Tibial artery (tissue), 4 donors: ENCODE measurements at regions of chr15 and their contacts with region 1.

Region 1: GRCh38 chr15:59492389-59493377 is 54.7 kb downstream of the FAM81A start:
- DNase-seq: peak; percentile 48 to 77
- H3K4me3 ChIP-seq: no peak overlapping the region
- H3K27ac ChIP-seq: no peak overlapping the region
- H3K4me1 ChIP-seq: peaks cover 0 to 8% (median 3%) of the 10 kb centered on the region in 4 donors
- H3K27me3 ChIP-seq: no peaks in the 10 kb centered on the region
- CTCF ChIP-seq: peak; percentile 76 to 91

Region 2: GRCh38 chr15:58980351-58980939 is 512.2 kb before region 1 on chr15:
- intact Hi-C with region 1: loop called (anchors 5 kb)
- DNase-seq: no peak
- H3K4me3 ChIP-seq: no peak overlapping the region
- H3K27ac ChIP-seq: no peak overlapping the region
- H3K4me1 ChIP-seq: peaks cover 0 to 5% (median 2%) of the 10 kb centered on the region in 4 donors
- H3K27me3 ChIP-seq: no peaks in the 10 kb centered on the region
- CTCF ChIP-seq: peak; percentile 36 to 59

Region 3: GRCh38 chr15:59174835-59175831 is 317.6 kb before region 1 on chr15:
- intact Hi-C with region 1: loop called (anchors 5 kb)
- DNase-seq: peak in 1 of 2 donors; percentile 49
- H3K4me3 ChIP-seq: no peak overlapping the region
- H3K27ac ChIP-seq: peak overlapping the region; percentile 25 to 53
- H3K4me1 ChIP-seq: peaks cover 6 to 28% (median 14%) of the 10 kb centered on the region in 4 donors
- H3K27me3 ChIP-seq: no peaks in the 10 kb centered on the region
- CTCF ChIP-seq: peak; percentile 58 to 72

Region 4: DNA sequence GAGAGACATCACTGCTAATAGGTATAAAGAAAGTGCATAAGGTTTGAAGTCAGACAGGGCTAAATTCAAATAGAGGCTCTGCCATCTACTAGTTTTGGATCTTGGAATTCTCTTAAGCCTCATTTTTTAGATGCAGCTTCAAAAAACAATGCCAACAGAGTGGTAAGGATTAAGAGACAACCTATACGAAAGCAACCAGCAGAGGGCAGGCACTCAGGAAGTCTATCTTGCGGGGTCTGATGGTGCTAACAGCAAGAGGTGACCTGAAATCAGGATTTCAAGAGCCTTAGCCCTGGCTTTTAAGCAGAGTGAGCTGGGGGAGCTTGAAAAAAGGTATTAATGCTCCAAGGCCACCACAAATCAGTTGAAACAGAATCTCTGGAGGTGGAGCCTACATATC is 245.3 kb before region 1 on chr15:
- intact Hi-C with region 1: loop called (anchors 10 kb)
- DNase-seq: peak; percentile 55 to 72
- H3K4me3 ChIP-seq: no peak overlapping the region
- H3K27ac ChIP-seq: no peak overlapping the region
- H3K4me1 ChIP-seq: peaks cover 0 to 6% (median 0%) of the 10 kb centered on the region in 4 donors
- H3K27me3 ChIP-seq: no peaks in the 10 kb centered on the region
- CTCF ChIP-seq: peak; percentile 55 to 57

Region 5: DNA sequence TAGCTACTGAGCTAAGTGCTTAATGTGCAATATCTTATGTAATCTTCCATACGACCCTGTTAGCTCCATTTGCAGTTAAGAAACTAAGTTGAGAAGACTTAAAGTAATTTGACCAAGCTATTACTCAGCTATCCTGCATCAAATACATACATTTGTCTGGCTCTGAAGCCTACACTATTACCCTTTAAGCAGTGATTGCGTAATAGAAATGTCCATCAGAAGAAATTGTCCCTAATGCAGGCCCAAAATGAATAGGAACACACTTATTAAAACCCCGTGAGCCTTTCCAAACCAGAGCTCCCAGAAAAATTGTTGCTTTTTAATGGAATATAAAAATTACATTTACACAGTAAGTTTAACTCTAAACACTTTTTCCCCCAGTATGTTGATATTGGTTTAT is 114.7 kb before region 1 on chr15:
- intact Hi-C with region 1: loop called (anchors 2 kb)
- DNase-seq: no peak
- H3K4me3 ChIP-seq: no peak overlapping the region
- H3K27ac ChIP-seq: no peak overlapping the region
- H3K4me1 ChIP-seq: peaks cover 0 to 18% (median 2%) of the 10 kb centered on the region in 4 donors
- H3K27me3 ChIP-seq: no peaks in the 10 kb centered on the region
- CTCF ChIP-seq: no peak

Region 6: GRCh38 chr15:60035344-60035743 is 542.7 kb after region 1 on chr15:
- intact Hi-C with region 1: no loop called
- DNase-seq: no peak
- H3K4me3 ChIP-seq: no peak overlapping the region
- H3K27ac ChIP-seq: no peak overlapping the region
- H3K4me1 ChIP-seq: no peaks in the 10 kb centered on the region
- H3K27me3 ChIP-seq: peaks cover 0 to 15% of the 10 kb centered on the region in 2 donors
- CTCF ChIP-seq: no peak